ENCODE measurements at regions of chr12 and their contacts with region 1.

Region 1: GRCh38 chr12:57693659-57694458 is at the start of gene OS9:
- DNase-seq: peak; percentile 95
- H3K4me3 Mint-ChIP-seq: no peak within 1 kb of the TSS
- H3K27ac Mint-ChIP-seq: no peak within 1 kb of the TSS
- H3K4me1 Mint-ChIP-seq: no peaks in the 10 kb centered on the region
- H3K27me3 Mint-ChIP-seq: peaks cover 19% of the 10 kb centered on the region
- total RNA-seq, gene OS9: 99.6 and 100.0 TPM in 2 replicates

Region 2: GRCh38 chr12:57546438-57547383 is 147.1 kb before region 1 on chr12 and contains the start of gene DCTN2:
- intact Hi-C with region 1: loop called (anchors 1 kb)
- DNase-seq: peak; percentile 93
- H3K4me3 Mint-ChIP-seq: peak within 1 kb of the TSS; percentile 100
- H3K27ac Mint-ChIP-seq: peak within 1 kb of the TSS; percentile 97
- H3K4me1 Mint-ChIP-seq: peaks cover 49% of the 10 kb centered on the region
- H3K27me3 Mint-ChIP-seq: peaks cover 13% of the 10 kb centered on the region
- total RNA-seq, gene DCTN2: 78.6 and 83.5 TPM in 2 replicates

Region 3: GRCh38 chr12:57590536-57591479 is 103.1 kb before region 1 on chr12 and contains the start of gene PIP4K2C:
- intact Hi-C with region 1: loop called (anchors 1 kb)
- DNase-seq: peak; percentile 77
- H3K4me3 Mint-ChIP-seq: peak within 1 kb of the TSS; percentile 90
- H3K27ac Mint-ChIP-seq: peak within 1 kb of the TSS; percentile 75
- H3K4me1 Mint-ChIP-seq: peaks cover 31% of the 10 kb centered on the region
- H3K27me3 Mint-ChIP-seq: no peaks in the 10 kb centered on the region
- total RNA-seq, gene PIP4K2C: 22.8 and 25.7 TPM in 2 replicates

Region 4: GRCh38 chr12:57632694-57633477 is 61.0 kb before region 1 on chr12 and contains the start of gene B4GALNT1:
- intact Hi-C with region 1: loop called (anchors 1 kb)
- DNase-seq: peak; percentile 63
- H3K4me3 Mint-ChIP-seq: peak within 1 kb of the TSS; percentile 79
- H3K27ac Mint-ChIP-seq: no peak within 1 kb of the TSS
- H3K4me1 Mint-ChIP-seq: peaks cover 6% of the 10 kb centered on the region
- H3K27me3 Mint-ChIP-seq: peaks cover 54% of the 10 kb centered on the region
- total RNA-seq, gene B4GALNT1: 4.4 and 4.6 TPM in 2 replicates

Region 5: DNA sequence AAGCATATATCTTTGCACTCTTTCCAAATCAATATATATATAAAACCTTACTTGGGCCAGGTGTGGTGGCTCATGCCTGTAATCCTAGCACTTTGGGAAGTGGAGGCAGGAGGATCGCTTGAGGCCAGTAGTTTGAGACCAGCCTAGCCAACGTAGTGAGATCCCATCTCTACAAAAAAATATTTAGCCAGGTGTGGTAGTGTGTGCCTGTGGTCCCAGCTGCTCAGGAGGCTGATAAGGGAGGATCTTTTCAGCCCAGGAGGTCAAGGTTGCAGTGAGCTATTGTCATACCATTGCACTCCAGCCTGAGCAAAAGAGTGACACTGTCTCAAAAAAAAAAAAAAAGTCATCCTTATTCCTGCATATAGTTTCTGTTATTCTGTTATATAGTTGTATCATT is 14.4 kb after region 1 on chr12:
- intact Hi-C with region 1: no loop called
- DNase-seq: no peak
- H3K4me3 Mint-ChIP-seq: no peak overlapping the region
- H3K27ac Mint-ChIP-seq: no peak overlapping the region
- H3K4me1 Mint-ChIP-seq: peaks cover 10% of the 10 kb centered on the region
- H3K27me3 Mint-ChIP-seq: no peaks in the 10 kb centered on the region

Measured in activated T-helper 1 cell treated with anti-CD3 and anti-CD28 coated beads, Interleukin-12 subunit alpha, Interleukin-12 subunit beta, Interleukin-2, Interleukin-4 antibody, amounts not matched to agents 30 ng/mL and 10 ng/mL and 1 ng/mL, durations not matched to agents 14 hours and 24 hours and 36 hours (primary cell).